Breast epithelium (tissue), 4 donors: ENCODE measurements at regions of chr5 and their contacts with region 1.

Region 1: GRCh38 chr5:16855485-16855884 is 80.6 kb downstream of the MYO10 start:
- DNase-seq: no peak
- H3K4me3 ChIP-seq: no peak overlapping the region
- H3K27ac ChIP-seq: no peak overlapping the region
- H3K4me1 ChIP-seq: no peaks in the 10 kb centered on the region
- H3K27me3 ChIP-seq: no peaks in the 10 kb centered on the region
- CTCF ChIP-seq: no peak
- POLR2A ChIP-seq: no peak

Region 2: GRCh38 chr5:16064135-16064893 is 791.2 kb before region 1 on chr5:
- intact Hi-C with region 1: loop called (anchors 5 kb)
- DNase-seq: no peak
- H3K4me3 ChIP-seq: no peak overlapping the region
- H3K27ac ChIP-seq: no peak overlapping the region
- H3K4me1 ChIP-seq: no peaks in the 10 kb centered on the region
- H3K27me3 ChIP-seq: no peaks in the 10 kb centered on the region
- CTCF ChIP-seq: no peak
- POLR2A ChIP-seq: no peak

Region 3: GRCh38 chr5:16819522-16820167 is 35.8 kb before region 1 on chr5:
- intact Hi-C with region 1: loop called (anchors 2 kb)
- DNase-seq: no peak
- H3K4me3 ChIP-seq: no peak overlapping the region
- H3K27ac ChIP-seq: no peak overlapping the region
- H3K4me1 ChIP-seq: no peaks in the 10 kb centered on the region
- H3K27me3 ChIP-seq: no peaks in the 10 kb centered on the region
- CTCF ChIP-seq: no peak
- POLR2A ChIP-seq: no peak

Region 4: DNA sequence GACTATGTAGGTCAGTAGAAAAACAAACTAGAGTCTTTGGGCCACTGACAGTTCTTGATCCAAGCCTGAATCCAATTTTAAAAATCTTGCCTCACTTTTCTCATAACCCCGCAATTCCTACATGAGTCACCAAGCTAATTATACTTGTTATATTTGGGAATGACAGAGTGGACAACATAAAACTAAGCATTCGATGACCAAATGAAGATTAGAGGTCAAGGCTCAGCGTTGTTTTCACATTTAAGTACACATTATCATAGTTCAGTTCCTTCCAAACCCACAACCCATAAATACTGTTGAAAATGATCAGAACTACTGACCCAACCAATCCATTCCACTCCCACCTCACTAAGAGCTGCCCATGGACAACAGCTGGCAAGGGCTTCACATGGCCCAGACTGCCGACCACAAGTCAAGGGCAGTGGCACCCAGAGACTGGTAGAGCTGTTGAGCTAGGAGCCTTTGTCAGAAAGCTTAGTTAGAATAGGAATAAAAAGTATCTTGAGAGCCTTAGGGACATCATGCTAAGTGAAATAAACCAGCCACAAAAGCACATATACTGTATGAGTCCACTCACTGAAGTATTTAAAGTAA is 16.4 kb after region 1 on chr5:
- intact Hi-C with region 1: loop called (anchors 1 kb)
- DNase-seq: no peak
- H3K4me3 ChIP-seq: no peak overlapping the region
- H3K27ac ChIP-seq: peak overlapping the region; percentile 66 to 73
- H3K4me1 ChIP-seq: no peaks in the 10 kb centered on the region
- H3K27me3 ChIP-seq: no peaks in the 10 kb centered on the region
- CTCF ChIP-seq: no peak
- POLR2A ChIP-seq: no peak

Region 5: DNA sequence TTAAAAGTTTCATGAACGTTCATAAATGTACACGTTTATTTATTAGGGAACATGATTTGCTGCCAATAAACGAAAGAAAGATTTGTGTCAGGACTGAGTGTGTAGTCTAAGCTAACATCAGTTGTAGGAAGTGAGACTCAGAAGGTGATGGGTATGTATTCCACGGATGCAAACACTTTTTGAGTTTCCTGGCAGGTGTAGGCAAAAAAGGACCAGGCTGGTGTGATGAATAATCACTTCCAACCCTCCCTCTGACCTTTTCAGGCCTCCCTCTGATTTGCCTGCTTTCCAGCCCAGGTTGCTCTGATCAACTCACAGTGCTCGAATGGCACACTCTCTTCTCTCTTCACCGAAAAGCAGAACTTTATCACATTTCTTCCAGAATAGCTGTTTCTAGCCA is 413.7 kb after region 1 on chr5:
- intact Hi-C with region 1: no loop called
- DNase-seq: no peak
- H3K4me3 ChIP-seq: no peak overlapping the region
- H3K27ac ChIP-seq: no peak overlapping the region
- H3K4me1 ChIP-seq: no peaks in the 10 kb centered on the region
- H3K27me3 ChIP-seq: no peaks in the 10 kb centered on the region
- CTCF ChIP-seq: no peak
- POLR2A ChIP-seq: no peak